ENCODE measurements at regions of chr14 and their contacts with region 1.

Region 1: GRCh38 chr14:89416002-89416995 is 734 bp downstream of the FOXN3 start:
- DNase-seq: peak; percentile 100

Region 2: DNA sequence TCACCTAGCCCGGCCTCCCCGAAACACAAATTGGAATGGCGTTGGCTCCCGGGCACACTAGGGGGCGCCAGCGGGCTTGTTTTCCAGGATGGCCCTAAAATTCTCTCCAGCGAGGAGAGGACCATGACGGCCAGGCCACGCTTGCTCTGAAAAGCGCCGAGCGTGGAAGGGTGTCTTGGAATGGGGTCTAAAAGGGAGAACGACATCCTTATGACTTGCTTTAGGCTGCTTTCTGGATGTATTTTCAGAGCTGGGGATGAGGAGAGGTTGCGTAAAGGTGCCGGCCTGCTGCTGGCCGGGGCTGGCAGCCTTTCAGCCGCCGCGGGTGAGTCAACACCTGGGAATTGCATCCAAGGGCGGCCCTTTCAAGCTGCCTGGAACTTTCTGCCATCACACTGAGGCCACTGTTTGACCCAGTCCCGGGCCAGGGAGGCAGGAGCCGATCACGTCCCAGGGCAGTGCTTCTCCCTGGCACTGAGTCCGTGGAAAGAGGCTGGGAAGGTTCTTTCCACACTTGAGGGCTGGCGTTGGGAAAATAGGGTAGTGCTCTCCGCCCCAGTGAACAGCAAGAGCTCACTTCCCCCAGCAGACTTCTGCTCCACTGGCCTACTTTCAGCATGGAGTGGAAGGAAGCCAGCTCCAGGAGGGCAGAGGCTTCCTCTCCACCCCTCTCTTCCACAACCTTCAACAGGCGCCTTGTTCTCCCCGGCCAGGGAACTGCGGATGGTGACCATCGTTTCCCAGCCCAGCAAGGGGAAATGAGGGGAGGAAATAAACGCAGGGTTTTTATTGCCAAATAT is 375.6 kb before region 1 on chr14:
- intact Hi-C with region 1: loop called (anchors 2 kb)
- DNase-seq: peak; percentile 92

Region 3: GRCh38 chr14:89303457-89304435 is 112.6 kb before region 1 on chr14:
- intact Hi-C with region 1: loop called (anchors 1 kb)
- DNase-seq: peak; percentile 85

Region 4: DNA sequence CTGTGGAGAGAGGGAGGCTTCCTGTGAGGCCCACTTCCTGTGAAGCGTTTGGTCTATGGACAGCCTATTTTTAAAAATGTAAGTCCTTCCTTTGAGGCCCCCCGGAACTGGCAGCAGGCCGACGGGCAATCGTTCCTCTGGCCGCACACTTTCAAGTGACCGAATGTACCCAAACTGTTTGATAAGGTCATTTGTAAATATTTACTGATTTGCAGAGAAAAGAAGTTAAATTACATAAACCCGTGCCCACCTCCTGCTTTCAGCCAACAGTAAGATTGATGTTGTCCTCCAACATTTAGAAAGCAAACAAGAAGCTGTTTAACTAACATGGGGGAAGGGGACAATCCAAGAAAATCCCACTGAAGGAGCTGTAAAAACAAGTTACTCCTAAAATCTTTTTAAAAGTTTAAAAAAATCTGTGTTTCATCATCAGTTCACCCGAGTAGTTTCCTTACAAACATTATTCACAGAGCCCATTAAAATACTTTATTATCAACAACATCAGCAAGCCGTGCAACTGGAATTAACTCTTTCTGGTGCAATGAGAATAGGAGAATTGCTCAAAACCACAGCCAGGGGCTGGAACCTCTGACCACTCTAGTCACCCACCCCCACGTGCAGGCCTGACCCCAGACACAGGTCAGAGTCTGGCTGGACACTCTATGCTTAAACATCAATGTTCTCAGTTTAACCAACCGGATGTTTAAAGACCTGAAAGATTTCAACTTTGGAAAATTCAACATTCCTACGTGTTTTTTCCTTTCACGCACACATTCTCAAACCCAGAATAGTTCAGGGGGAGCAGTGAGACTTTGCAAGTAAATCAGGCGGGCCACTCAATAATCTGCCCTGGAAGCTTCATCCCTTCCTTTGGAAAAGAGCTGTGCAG is 64.5 kb before region 1 on chr14:
- intact Hi-C with region 1: no loop called
- DNase-seq: no peak

Region 5: GRCh38 chr14:89566644-89567415 is 150.5 kb after region 1 on chr14:
- intact Hi-C with region 1: loop called (anchors 5 kb)
- DNase-seq: no peak

Region 6: GRCh38 chr14:89701211-89702043 is 285.1 kb after region 1 on chr14:
- intact Hi-C with region 1: loop called (anchors 2 kb)
- DNase-seq: peak; percentile 97

Region 7: GRCh38 chr14:91164685-91165084 is 1748.4 kb after region 1 on chr14:
- intact Hi-C with region 1: no loop called
- DNase-seq: no peak